CD4-positive, alpha-beta memory T cell (primary cell): ENCODE measurements at regions of chr18 and their contacts with region 1.

Region 1: GRCh38 chr18:35040988-35041814 is at the start of gene MAPRE2:
- DNase-seq: peak; percentile 98 to 99 (median 99)
- H3K4me3 ChIP-seq: peak within 1 kb of the TSS; percentile 73 to 98
- H3K4me3 Mint-ChIP-seq: peak within 1 kb of the TSS; percentile 91 to 99 (median 98)
- H3K27ac ChIP-seq: peak within 1 kb of the TSS; percentile 94
- H3K27ac Mint-ChIP-seq: peak within 1 kb of the TSS; percentile 93 to 100 (median 98)
- H3K4me1 ChIP-seq: peaks cover 43% of the 10 kb centered on the region
- H3K4me1 Mint-ChIP-seq: peaks cover 35 to 60% (median 46%) of the 10 kb centered on the region in 4 donors
- H3K27me3 ChIP-seq: no peaks in the 10 kb centered on the region
- H3K27me3 Mint-ChIP-seq: peaks cover 0 to 2% of the 10 kb centered on the region in 2 donors
- total RNA-seq, gene MAPRE2: 48.8 to 54.1 TPM

Region 2: GRCh38 chr18:35005963-35006577 is 35.1 kb before region 1 on chr18:
- CTCF ChIA-PET with region 1: interaction called, 15 read pairs
- POLR2A ChIA-PET with region 1: no interaction called
- intact Hi-C with region 1: loop called (anchors 1 kb)
- DNase-seq: peak; percentile 35 to 63 (median 51)
- H3K4me3 ChIP-seq: no peak overlapping the region
- H3K4me3 Mint-ChIP-seq: no peak overlapping the region
- H3K27ac ChIP-seq: no peak overlapping the region
- H3K27ac Mint-ChIP-seq: no peak overlapping the region
- H3K4me1 ChIP-seq: no peaks in the 10 kb centered on the region
- H3K4me1 Mint-ChIP-seq: no peaks in the 10 kb centered on the region
- H3K27me3 ChIP-seq: no peaks in the 10 kb centered on the region
- H3K27me3 Mint-ChIP-seq: peaks cover 0 to 3% of the 10 kb centered on the region in 2 donors

Region 3: DNA sequence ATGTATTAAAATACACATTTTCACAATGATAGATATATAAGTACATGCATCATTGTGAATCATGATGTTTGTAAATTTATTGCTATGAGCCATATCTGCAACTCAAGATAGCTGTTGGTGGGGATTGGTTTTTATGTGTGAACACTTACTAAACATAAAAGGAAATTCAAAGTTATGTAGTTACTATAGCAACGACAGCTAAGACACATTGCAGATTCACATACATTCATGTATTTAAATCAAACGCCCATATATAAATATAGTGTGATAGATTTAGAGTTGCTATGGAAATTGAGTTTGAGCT is 65.6 kb after region 1 on chr18:
- CTCF ChIA-PET with region 1: no interaction called
- POLR2A ChIA-PET with region 1: interaction called, 5 read pairs
- intact Hi-C with region 1: loop called (anchors 5 kb)
- DNase-seq: peak in 4 of 5 donors; percentile 14 to 44 (median 25)
- H3K4me3 ChIP-seq: no peak overlapping the region
- H3K4me3 Mint-ChIP-seq: peak overlapping the region in 2 of 8 donors; percentile 2 to 6
- H3K27ac ChIP-seq: no peak overlapping the region
- H3K27ac Mint-ChIP-seq: peak overlapping the region in 6 of 7 donors; percentile 1 to 58 (median 39)
- H3K4me1 ChIP-seq: peaks cover 32% of the 10 kb centered on the region
- H3K4me1 Mint-ChIP-seq: peaks cover 36 to 54% (median 48%) of the 10 kb centered on the region in 4 donors
- H3K27me3 ChIP-seq: no peaks in the 10 kb centered on the region
- H3K27me3 Mint-ChIP-seq: no peaks in the 10 kb centered on the region

Region 4: GRCh38 chr18:35240664-35241447 is 199.7 kb after region 1 on chr18 and contains the start of gene ZNF397:
- CTCF ChIA-PET with region 1: interaction called, 3 read pairs
- POLR2A ChIA-PET with region 1: interaction called, 9 read pairs
- intact Hi-C with region 1: loop called (anchors 1 kb)
- DNase-seq: peak; percentile 91 to 94 (median 92)
- H3K4me3 ChIP-seq: peak within 1 kb of the TSS; percentile 81 to 90
- H3K4me3 Mint-ChIP-seq: peak within 1 kb of the TSS; percentile 96 to 98 (median 96)
- H3K27ac ChIP-seq: peak within 1 kb of the TSS; percentile 95
- H3K27ac Mint-ChIP-seq: peak within 1 kb of the TSS; percentile 94 to 100 (median 99)
- H3K4me1 ChIP-seq: peaks cover 17% of the 10 kb centered on the region
- H3K4me1 Mint-ChIP-seq: peaks cover 10 to 40% (median 15%) of the 10 kb centered on the region in 4 donors
- H3K27me3 ChIP-seq: no peaks in the 10 kb centered on the region
- H3K27me3 Mint-ChIP-seq: no peaks in the 10 kb centered on the region
- total RNA-seq, gene ZNF397: 56.1 to 58.5 TPM

Region 5: GRCh38 chr18:35343936-35344735 is 302.9 kb after region 1 on chr18 and contains the start of gene ZNF24:
- CTCF ChIA-PET with region 1: no interaction called
- POLR2A ChIA-PET with region 1: interaction called, 7 read pairs
- intact Hi-C with region 1: loop called (anchors 1 kb)
- DNase-seq: peak; percentile 89 to 95 (median 89)
- H3K4me3 ChIP-seq: peak within 1 kb of the TSS; percentile 87 to 96
- H3K4me3 Mint-ChIP-seq: peak within 1 kb of the TSS; percentile 94 to 99 (median 98)
- H3K27ac ChIP-seq: peak within 1 kb of the TSS; percentile 99
- H3K27ac Mint-ChIP-seq: peak within 1 kb of the TSS; percentile 96 to 99 (median 98)
- H3K4me1 ChIP-seq: peaks cover 45% of the 10 kb centered on the region
- H3K4me1 Mint-ChIP-seq: peaks cover 32 to 58% (median 44%) of the 10 kb centered on the region in 4 donors
- H3K27me3 ChIP-seq: no peaks in the 10 kb centered on the region
- H3K27me3 Mint-ChIP-seq: no peaks in the 10 kb centered on the region
- total RNA-seq, gene ZNF24: 89.1 to 90.5 TPM

Region 6: GRCh38 chr18:35972197-35973052 is 931.2 kb after region 1 on chr18 and contains the start of gene RMP24:
- CTCF ChIA-PET with region 1: no interaction called
- POLR2A ChIA-PET with region 1: interaction called, 5 read pairs
- intact Hi-C with region 1: loop called (anchors 2 kb)
- DNase-seq: peak; percentile 91 to 94 (median 93)
- H3K4me3 ChIP-seq: peak within 1 kb of the TSS; percentile 84 to 92
- H3K4me3 Mint-ChIP-seq: peak within 1 kb of the TSS; percentile 91 to 98 (median 96)
- H3K27ac ChIP-seq: peak within 1 kb of the TSS; percentile 72
- H3K27ac Mint-ChIP-seq: peak within 1 kb of the TSS; percentile 92 to 99 (median 98)
- H3K4me1 ChIP-seq: peaks cover 51% of the 10 kb centered on the region
- H3K4me1 Mint-ChIP-seq: peaks cover 38 to 66% (median 52%) of the 10 kb centered on the region in 4 donors
- H3K27me3 ChIP-seq: no peaks in the 10 kb centered on the region
- H3K27me3 Mint-ChIP-seq: no peaks in the 10 kb centered on the region

Region 7: GRCh38 chr18:36129300-36130038 is 1088.3 kb after region 1 on chr18 and contains the starts of genes ELP2 and SLC39A6:
- CTCF ChIA-PET with region 1: no interaction called
- POLR2A ChIA-PET with region 1: no interaction called
- intact Hi-C with region 1: loop called (anchors 5 kb)
- DNase-seq: peak; percentile 95
- H3K4me3 ChIP-seq: peak within 1 kb of the TSS; percentile 85 to 90
- H3K4me3 Mint-ChIP-seq: peak within 1 kb of the TSS; percentile 92 to 98 (median 98)
- H3K27ac ChIP-seq: peak within 1 kb of the TSS; percentile 100
- H3K27ac Mint-ChIP-seq: peak within 1 kb of the TSS; percentile 97 to 99 (median 98)
- H3K4me1 ChIP-seq: peaks cover 43% of the 10 kb centered on the region
- H3K4me1 Mint-ChIP-seq: peaks cover 39 to 80% (median 60%) of the 10 kb centered on the region in 4 donors
- H3K27me3 ChIP-seq: no peaks in the 10 kb centered on the region
- H3K27me3 Mint-ChIP-seq: no peaks in the 10 kb centered on the region
- total RNA-seq, gene ELP2: 139 to 143 TPM
- total RNA-seq, gene SLC39A6: 18.9 to 19.7 TPM